Aorta (tissue), 5 donors: ENCODE measurements at regions of chr3 and their contacts with region 1.

Region 1: DNA sequence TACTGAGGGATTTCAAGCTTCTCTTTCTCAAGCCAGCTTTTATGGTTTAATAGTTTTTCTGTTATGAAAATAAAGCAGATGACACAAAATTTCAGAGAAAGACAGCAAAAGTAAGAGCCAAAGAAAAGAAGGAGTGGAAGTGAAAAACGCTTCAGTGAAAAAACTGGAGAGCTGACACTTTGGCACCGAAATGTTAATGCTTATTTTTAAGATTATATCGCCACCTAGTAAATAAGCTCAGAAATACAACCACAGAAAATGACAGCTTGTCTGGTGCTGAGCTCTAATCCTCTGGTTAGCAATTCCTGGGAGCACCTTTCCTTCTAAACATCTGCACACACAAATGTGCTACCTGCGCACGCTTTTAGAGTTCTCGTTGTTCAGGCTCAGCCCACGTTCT is 101.6 kb downstream of the ZPLD1 start:
- DNase-seq: no peak
- ATAC-seq: no peak
- H3K4me3 ChIP-seq: no peak overlapping the region
- H3K27ac ChIP-seq: no peak overlapping the region
- H3K4me1 ChIP-seq: no peaks in the 10 kb centered on the region
- H3K27me3 ChIP-seq: no peaks in the 10 kb centered on the region

Region 2: DNA sequence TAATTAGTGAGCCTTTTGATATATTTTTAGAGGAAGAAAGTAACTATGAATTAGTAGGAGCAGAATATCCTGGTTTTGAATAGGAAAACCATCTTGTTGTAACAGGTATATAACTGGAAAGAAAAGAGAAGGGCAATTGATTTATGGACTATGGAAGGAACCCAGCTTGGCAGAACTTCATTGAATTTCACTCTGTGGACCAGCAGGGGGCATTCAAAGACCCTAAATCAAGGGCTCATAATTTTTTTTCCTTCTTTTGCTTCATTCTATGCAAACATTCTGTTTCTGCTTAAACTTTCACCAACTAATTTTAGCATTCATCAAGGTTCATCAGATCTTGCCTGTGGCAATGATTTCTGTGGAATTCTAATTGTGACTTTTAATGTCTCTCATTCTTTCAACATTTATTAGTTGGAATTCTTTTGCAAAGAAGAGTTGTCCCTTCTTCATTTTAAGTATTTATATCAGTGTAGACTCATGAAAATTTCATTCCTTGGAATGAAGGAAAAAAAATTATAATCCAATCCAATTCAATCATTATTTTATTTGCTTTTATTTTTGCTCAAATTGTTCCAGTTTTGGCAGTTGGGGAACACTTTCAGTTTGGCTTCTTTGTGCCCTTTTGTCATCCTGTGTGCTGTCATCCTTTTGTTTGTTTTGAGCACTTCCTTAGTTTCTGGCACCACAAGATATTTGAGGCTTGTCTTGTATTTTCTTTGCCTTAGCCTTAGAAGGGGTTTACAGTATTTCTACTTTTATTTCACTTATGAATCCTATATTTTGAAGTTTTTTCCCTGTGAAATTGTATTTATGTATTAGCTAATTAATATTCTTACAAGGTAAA is 727.1 kb before region 1 on chr3:
- intact Hi-C with region 1: loop called (anchors 5 to 10 kb)
- DNase-seq: no peak
- ATAC-seq: peak; percentile 60
- H3K4me3 ChIP-seq: no peak overlapping the region
- H3K27ac ChIP-seq: no peak overlapping the region
- H3K4me1 ChIP-seq: no peaks in the 10 kb centered on the region
- H3K27me3 ChIP-seq: no peaks in the 10 kb centered on the region